ENCODE measurements at regions of chr4 and their contacts with region 1.

Region 1: GRCh38 chr4:151781026-151781425 is 20.2 kb upstream of the GATB start:
- DNase-seq: no peak
- H3K4me3 ChIP-seq: no peak overlapping the region
- H3K27ac ChIP-seq: no peak overlapping the region
- H3K4me1 ChIP-seq: peaks cover 0 to 12% (median 5%) of the 10 kb centered on the region in 4 experiments; a peak in 3 of 7 replicates
- H3K27me3 ChIP-seq: no peaks in the 10 kb centered on the region
- CTCF ChIP-seq: no peak
- EP300 ChIP-seq: no peak
- POLR2A ChIP-seq: no peak
- RAD21 ChIP-seq: no peak

Region 2: GRCh38 chr4:151700566-151701316 is 80.3 kb before region 1 on chr4:
- CTCF ChIA-PET with region 1: no interaction called
- POLR2A ChIA-PET with region 1: no interaction called
- DNase-seq: no peak
- H3K4me3 ChIP-seq: no peak overlapping the region
- H3K27ac ChIP-seq: no peak overlapping the region
- H3K4me1 ChIP-seq: no peaks in the 10 kb centered on the region
- H3K27me3 ChIP-seq: no peaks in the 10 kb centered on the region
- CTCF ChIP-seq: no peak
- EP300 ChIP-seq: no peak
- POLR2A ChIP-seq: no peak
- RAD21 ChIP-seq: no peak

Region 3: DNA sequence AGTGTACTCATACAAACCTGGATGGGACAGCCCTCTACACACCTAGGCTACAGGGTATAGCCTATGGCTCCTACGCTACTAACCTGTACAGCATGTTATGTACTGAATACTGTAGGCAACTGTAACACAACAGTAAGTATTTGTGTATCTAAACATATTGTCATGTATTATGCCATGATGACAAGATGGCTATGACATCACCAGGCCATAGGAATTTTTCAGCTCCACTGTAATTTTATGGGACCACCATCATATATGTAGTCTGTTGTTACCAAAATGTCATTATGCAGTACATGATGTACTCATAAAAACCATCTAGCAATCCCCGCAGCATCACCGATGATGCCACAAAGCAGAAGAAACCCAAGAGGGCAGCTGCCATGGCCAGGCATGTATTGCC is 40.7 kb before region 1 on chr4:
- CTCF ChIA-PET with region 1: no interaction called
- POLR2A ChIA-PET with region 1: no interaction called
- DNase-seq: no peak
- H3K4me3 ChIP-seq: no peak overlapping the region
- H3K27ac ChIP-seq: no peak overlapping the region
- H3K4me1 ChIP-seq: peaks cover 0 to 3% (median 0%) of the 10 kb centered on the region in 4 experiments; a peak in 1 of 7 replicates
- H3K27me3 ChIP-seq: no peaks in the 10 kb centered on the region
- CTCF ChIP-seq: no peak
- EP300 ChIP-seq: no peak
- POLR2A ChIP-seq: no peak
- RAD21 ChIP-seq: no peak

Region 4: DNA sequence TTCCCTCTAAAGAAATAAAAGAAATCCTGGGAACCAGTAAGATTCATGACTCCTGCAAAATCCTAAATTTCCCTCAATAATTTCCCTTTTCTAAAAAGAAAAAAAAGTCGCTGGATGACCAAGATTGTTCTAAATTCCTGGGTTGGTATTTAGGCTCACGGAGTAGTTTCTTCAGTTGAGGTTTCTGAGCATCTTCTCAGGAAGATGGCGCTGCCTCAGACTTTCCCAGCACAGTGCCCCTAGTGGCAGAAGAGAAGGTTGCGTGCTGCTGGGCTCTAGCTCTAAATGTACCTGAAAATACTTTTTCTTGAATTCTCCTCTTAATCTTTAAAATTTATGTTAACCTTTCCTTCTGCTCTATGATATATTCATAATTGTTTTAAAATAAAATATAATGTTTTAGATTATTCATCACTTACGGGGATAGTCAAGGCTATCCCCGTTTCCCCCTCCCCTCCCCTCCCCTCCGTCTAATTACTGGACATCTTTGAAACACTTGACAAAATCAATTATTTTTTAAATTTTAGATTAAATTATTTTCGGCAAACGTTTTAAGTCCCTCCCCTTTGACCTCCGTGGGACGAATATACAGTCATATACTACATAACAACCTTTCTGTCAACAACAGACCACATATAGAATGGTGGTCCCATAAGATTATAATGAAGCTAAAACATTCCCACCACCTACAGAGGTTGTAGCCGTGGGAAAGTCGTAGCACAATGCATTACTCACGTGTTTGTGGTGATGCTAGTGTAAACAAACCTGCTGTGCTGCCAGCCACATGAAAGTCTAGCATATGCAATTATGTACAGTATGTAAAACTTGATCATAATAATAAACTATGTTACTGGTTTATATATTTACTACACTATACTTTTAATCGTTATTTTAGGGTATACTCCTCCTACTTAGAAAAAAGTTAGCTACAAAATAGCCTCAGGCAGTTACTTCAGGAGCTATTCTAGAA is 20.8 kb after region 1 on chr4:
- CTCF ChIA-PET with region 1: interaction called, 15 read pairs
- POLR2A ChIA-PET with region 1: no interaction called
- DNase-seq: peak in 1 of 2 experiments; percentile 74
- H3K4me3 ChIP-seq: no peak overlapping the region
- H3K27ac ChIP-seq: no peak overlapping the region
- H3K4me1 ChIP-seq: peaks cover 0 to 7% (median 2%) of the 10 kb centered on the region in 4 experiments; a peak in 2 of 7 replicates
- H3K27me3 ChIP-seq: no peaks in the 10 kb centered on the region; a peak in 1 of 7 replicates
- CTCF ChIP-seq: peak; percentile 77 to 97 (median 89)
- EP300 ChIP-seq: no peak
- POLR2A ChIP-seq: no peak
- RAD21 ChIP-seq: peak; percentile 56 to 65

Region 5: DNA sequence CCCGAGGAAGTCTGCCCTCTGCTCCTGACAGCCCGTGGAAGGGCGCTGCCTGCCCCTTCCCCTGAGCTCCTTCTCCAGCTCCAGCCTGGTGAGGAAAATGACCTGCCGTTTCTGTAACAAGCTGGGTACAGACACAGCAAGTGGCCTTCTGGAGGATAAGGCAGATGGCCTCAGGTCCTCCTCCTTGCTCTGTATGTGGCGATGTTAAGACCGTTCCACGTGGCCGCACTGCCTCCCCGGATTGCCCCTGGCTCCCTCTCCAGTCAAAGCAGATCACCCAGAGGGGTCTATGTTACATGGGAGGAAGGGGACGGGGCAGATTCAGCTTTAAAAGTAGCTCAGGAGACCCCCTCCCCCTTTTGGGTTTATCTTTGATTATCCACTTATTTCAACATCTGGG is 60.1 kb after region 1 on chr4:
- CTCF ChIA-PET with region 1: no interaction called
- POLR2A ChIA-PET with region 1: no interaction called
- DNase-seq: no peak
- H3K4me3 ChIP-seq: no peak overlapping the region
- H3K27ac ChIP-seq: no peak overlapping the region
- H3K4me1 ChIP-seq: peaks cover 0 to 4% (median 0%) of the 10 kb centered on the region in 4 experiments; a peak in 2 of 7 replicates
- H3K27me3 ChIP-seq: no peaks in the 10 kb centered on the region
- CTCF ChIP-seq: no peak
- EP300 ChIP-seq: no peak
- POLR2A ChIP-seq: no peak
- RAD21 ChIP-seq: no peak

Measured in H1 (cell line).